Dorsolateral prefrontal cortex (tissue), 120 donors: ENCODE measurements at regions of chr5 and their contacts with region 1.

Region 1: GRCh38 chr5:32092938-32093812 is 80.9 kb downstream of the GOLPH3 start:
- DNase-seq: peak in 5 of 10 donors; percentile 56 to 81 (median 65)
- H3K4me3 ChIP-seq: no peak overlapping the region
- H3K27ac ChIP-seq: peak overlapping the region in 3 of 59 donors; percentile 9 to 52 (median 36)
- H3K27me3 ChIP-seq: no peaks in the 10 kb centered on the region
- CTCF ChIP-seq: peak; percentile 53 to 90 (median 81)

Region 2: GRCh38 chr5:31581498-31582099 is 511.6 kb before region 1 on chr5:
- intact Hi-C with region 1: loop called in 1 of 2 experiments (anchors 5 kb)
- DNase-seq: no peak
- H3K4me3 ChIP-seq: no peak overlapping the region
- H3K27ac ChIP-seq: no peak overlapping the region
- H3K27me3 ChIP-seq: no peaks in the 10 kb centered on the region
- CTCF ChIP-seq: peak; percentile 54 to 90 (median 70)

Region 3: DNA sequence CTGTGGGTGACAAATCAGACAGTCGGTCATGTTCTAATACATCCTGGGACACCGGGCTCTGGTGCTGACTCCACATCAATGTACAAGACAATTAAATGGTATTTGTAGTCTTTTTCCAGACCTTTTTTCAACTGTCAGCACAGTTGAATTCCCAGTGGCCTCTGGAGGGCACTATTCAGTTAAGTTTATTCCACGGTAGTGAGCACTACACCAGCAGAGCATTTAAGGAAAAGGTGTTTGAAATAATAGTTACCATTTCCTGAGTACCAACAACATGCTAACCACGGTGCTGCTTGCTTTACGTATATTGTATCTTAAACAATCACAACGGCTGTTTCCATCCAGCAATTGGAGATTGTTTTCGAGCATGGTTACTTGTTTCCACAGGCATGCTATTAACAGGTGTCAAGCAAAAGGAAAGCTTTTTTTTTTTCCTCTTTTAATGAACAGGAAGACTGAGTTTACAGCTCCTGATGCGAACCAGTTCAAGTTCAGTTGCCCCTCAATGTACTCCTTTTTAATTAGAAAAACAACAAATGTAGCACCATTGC is 267.6 kb before region 1 on chr5:
- intact Hi-C with region 1: loop called (anchors 5 kb)
- DNase-seq: peak in 5 of 10 donors; percentile 20 to 66 (median 41)
- H3K4me3 ChIP-seq: no peak overlapping the region
- H3K27ac ChIP-seq: peak overlapping the region in 3 of 59 donors; percentile 27 to 51 (median 34)
- H3K27me3 ChIP-seq: no peaks in the 10 kb centered on the region
- CTCF ChIP-seq: peak; percentile 48 to 91 (median 79)

Region 4: GRCh38 chr5:31921852-31922305 is 171.3 kb before region 1 on chr5:
- intact Hi-C with region 1: loop called in 1 of 2 experiments (anchors 5 kb)
- DNase-seq: no peak
- H3K4me3 ChIP-seq: no peak overlapping the region
- H3K27ac ChIP-seq: no peak overlapping the region
- H3K27me3 ChIP-seq: no peaks in the 10 kb centered on the region
- CTCF ChIP-seq: no peak